ENCODE measurements at regions of chr11 and their contacts with region 1.

Region 1: DNA sequence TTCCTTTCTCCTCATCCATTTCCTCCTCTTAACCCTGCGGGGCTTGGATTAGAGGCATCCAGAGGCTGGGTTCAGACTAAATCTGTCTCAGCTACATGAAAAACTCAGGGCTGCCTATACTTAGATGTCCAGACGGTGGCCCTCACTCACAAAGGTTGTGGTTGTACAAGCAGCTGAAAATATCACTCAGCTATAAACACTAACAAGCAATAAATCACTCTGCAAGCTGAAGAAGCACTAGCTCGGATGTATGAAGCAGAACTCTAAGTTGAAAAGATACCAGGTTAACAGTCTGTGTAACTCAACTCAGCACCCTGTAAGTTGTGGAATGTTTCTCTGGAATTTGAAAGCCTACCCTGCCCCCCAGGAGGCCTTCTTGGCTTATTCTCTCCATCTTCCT is 82.9 kb downstream of the EXT2 start:
- DNase-seq: no peak
- H3K4me3 ChIP-seq: no peak overlapping the region
- H3K27ac ChIP-seq: no peak overlapping the region
- H3K4me1 ChIP-seq: no peaks in the 10 kb centered on the region
- H3K27me3 ChIP-seq: no peaks in the 10 kb centered on the region
- CTCF ChIP-seq: no peak
- POLR2A ChIP-seq: no peak

Region 2: GRCh38 chr11:44110231-44110679 is 68.1 kb before region 1 on chr11:
- intact Hi-C with region 1: loop called (anchors 10 kb)
- DNase-seq: peak; percentile 30
- H3K4me3 ChIP-seq: no peak overlapping the region
- H3K27ac ChIP-seq: no peak overlapping the region
- H3K4me1 ChIP-seq: no peaks in the 10 kb centered on the region
- H3K27me3 ChIP-seq: no peaks in the 10 kb centered on the region
- CTCF ChIP-seq: peak in 3 of 4 experiments; percentile 38 to 54 (median 49)
- POLR2A ChIP-seq: no peak